ENCODE measurements at regions of chr10 and their contacts with region 1.

Region 1: DNA sequence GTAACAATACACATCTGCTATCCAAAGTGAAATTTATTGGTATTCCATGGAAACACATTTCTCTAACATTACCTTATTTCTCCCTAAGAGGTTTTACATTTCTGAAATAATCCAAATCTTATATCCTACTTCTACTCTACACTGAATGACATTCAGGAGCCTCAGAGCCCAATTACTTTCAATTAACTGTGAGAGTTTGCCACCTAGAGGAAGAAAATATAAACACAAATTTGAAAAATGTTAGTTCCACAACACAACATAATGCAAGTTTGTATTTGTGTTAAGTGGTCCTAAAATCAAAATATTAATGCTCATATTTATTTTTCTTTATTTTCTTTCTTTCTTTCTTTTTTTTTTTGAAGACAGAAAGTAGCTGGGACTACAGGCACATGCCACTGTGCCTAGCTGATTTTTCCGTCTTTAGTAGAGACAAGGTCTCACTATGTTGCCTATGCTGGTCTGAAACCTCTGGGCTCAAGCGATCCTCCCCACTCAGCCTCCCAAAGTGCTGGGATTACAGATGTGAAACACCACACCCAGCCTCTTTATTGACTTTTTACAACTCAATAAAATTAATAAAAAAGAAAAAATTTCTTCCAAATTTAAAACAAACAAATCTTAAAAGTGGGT is 46.0 kb downstream of the ATAD1 start:
- DNase-seq: peak in 2 of 9 experiments; percentile 7 to 33
- ATAC-seq: no peak
- H3K4me3 ChIP-seq: no peak overlapping the region
- H3K4me3 Mint-ChIP-seq: no peak overlapping the region
- H3K27ac ChIP-seq: no peak overlapping the region
- H3K27ac Mint-ChIP-seq: no peak overlapping the region
- H3K4me1 ChIP-seq: no peaks in the 10 kb centered on the region
- H3K4me1 Mint-ChIP-seq: peaks cover 2% of the 10 kb centered on the region
- H3K27me3 ChIP-seq: no peaks in the 10 kb centered on the region
- H3K27me3 Mint-ChIP-seq: no peaks in the 10 kb centered on the region
- CTCF ChIP-seq: peak; percentile 69

Region 2: DNA sequence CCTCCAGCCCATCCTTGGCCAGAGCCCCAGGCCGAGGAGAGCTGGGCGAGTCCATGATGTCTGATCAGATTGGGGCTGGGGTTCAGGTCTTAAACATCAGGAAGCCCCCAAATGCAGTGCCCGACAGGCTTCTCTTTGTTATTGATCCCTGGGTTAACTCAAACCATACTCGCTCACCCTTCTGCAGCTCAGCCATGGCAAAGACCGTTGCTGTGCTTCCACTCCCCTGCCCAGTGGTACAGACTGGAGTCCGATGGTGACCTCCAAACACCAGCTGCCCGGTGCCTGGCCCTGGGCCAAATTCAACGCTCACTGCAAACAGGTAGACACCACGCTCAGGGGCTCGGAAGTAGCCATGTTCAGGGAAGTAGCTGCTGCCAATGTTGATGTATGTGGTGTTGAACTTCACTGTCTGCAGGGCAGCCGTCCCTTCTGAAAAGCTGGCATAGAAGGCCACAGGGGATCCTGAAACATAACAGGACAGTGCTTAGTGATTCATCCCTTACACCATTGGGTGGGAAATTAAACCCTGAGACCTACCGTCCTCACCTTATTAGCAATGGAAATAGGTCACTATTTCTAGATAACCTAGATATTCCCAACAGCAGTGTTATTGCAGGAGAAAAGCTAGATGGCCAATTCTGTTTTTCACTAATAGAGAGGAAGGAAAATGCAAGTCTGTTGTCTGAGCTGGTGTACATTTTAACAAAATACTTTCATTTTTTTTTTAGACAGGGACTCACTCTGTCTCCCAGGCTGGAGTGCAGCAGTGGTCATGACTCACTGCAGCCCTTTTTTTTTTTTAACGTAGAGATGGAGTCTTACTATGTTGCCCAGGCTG is 835.1 kb before region 1 on chr10:
- CTCF ChIA-PET with region 1: no interaction called
- POLR2A ChIA-PET with region 1: no interaction called
- intact Hi-C with region 1: loop called in 1 of 2 experiments (anchors 10 kb)
- DNase-seq: no peak
- ATAC-seq: no peak
- H3K4me3 ChIP-seq: no peak overlapping the region
- H3K4me3 Mint-ChIP-seq: no peak overlapping the region
- H3K27ac ChIP-seq: no peak overlapping the region
- H3K27ac Mint-ChIP-seq: no peak overlapping the region
- H3K4me1 ChIP-seq: no peaks in the 10 kb centered on the region
- H3K4me1 Mint-ChIP-seq: no peaks in the 10 kb centered on the region
- H3K27me3 ChIP-seq: no peaks in the 10 kb centered on the region
- H3K27me3 Mint-ChIP-seq: no peaks in the 10 kb centered on the region
- CTCF ChIP-seq: no peak

Region 3: GRCh38 chr10:87531908-87532622 is 239.9 kb before region 1 on chr10:
- CTCF ChIA-PET with region 1: no interaction called
- POLR2A ChIA-PET with region 1: no interaction called
- intact Hi-C with region 1: loop called in 1 of 2 experiments (anchors 2 kb)
- DNase-seq: no peak
- ATAC-seq: no peak
- H3K4me3 ChIP-seq: no peak overlapping the region
- H3K4me3 Mint-ChIP-seq: no peak overlapping the region
- H3K27ac ChIP-seq: no peak overlapping the region
- H3K27ac Mint-ChIP-seq: no peak overlapping the region
- H3K4me1 ChIP-seq: no peaks in the 10 kb centered on the region
- H3K4me1 Mint-ChIP-seq: peaks cover 17% of the 10 kb centered on the region
- H3K27me3 ChIP-seq: no peaks in the 10 kb centered on the region
- H3K27me3 Mint-ChIP-seq: no peaks in the 10 kb centered on the region
- CTCF ChIP-seq: no peak

Region 4: GRCh38 chr10:87659571-87660483 is 112.2 kb before region 1 on chr10 and contains the start of gene PAPSS2:
- CTCF ChIA-PET with region 1: no interaction called
- POLR2A ChIA-PET with region 1: no interaction called
- intact Hi-C with region 1: loop called in 1 of 2 experiments (anchors 1 kb)
- DNase-seq: peak in 3 of 9 experiments; percentile 8 to 22 (median 20)
- ATAC-seq: peak; percentile 36
- H3K4me3 ChIP-seq: peak within 1 kb of the TSS; percentile 41 to 48
- H3K4me3 Mint-ChIP-seq: peak within 1 kb of the TSS; percentile 79
- H3K27ac ChIP-seq: no peak within 1 kb of the TSS
- H3K27ac Mint-ChIP-seq: no peak within 1 kb of the TSS
- H3K4me1 ChIP-seq: peaks cover 6% of the 10 kb centered on the region
- H3K4me1 Mint-ChIP-seq: peaks cover 11% of the 10 kb centered on the region
- H3K27me3 ChIP-seq: peaks cover 8 to 14% of the 10 kb centered on the region in 2 experiments
- H3K27me3 Mint-ChIP-seq: peaks cover 53% of the 10 kb centered on the region
- CTCF ChIP-seq: no peak
- total RNA-seq, gene PAPSS2: not detected

Region 5: GRCh38 chr10:87817609-87818504 is 45.9 kb after region 1 on chr10 and contains the start of gene ATAD1:
- CTCF ChIA-PET with region 1: no interaction called
- POLR2A ChIA-PET with region 1: no interaction called
- intact Hi-C with region 1: loop called in 1 of 2 experiments (anchors 5 kb)
- DNase-seq: peak; percentile 79 to 96 (median 88)
- ATAC-seq: peak; percentile 84
- H3K4me3 ChIP-seq: peak within 1 kb of the TSS; percentile 83 to 87
- H3K4me3 Mint-ChIP-seq: peak within 1 kb of the TSS; percentile 94
- H3K27ac ChIP-seq: peak within 1 kb of the TSS; percentile 89 to 95
- H3K27ac Mint-ChIP-seq: peak within 1 kb of the TSS; percentile 100
- H3K4me1 ChIP-seq: peaks cover 26% of the 10 kb centered on the region
- H3K4me1 Mint-ChIP-seq: peaks cover 45% of the 10 kb centered on the region
- H3K27me3 ChIP-seq: no peaks in the 10 kb centered on the region
- H3K27me3 Mint-ChIP-seq: no peaks in the 10 kb centered on the region
- CTCF ChIP-seq: peak; percentile 20
- total RNA-seq, gene ATAD1: 36.9 to 39.0 TPM